ENCODE measurements at regions of chr10 and their contacts with region 1.

Region 1: DNA sequence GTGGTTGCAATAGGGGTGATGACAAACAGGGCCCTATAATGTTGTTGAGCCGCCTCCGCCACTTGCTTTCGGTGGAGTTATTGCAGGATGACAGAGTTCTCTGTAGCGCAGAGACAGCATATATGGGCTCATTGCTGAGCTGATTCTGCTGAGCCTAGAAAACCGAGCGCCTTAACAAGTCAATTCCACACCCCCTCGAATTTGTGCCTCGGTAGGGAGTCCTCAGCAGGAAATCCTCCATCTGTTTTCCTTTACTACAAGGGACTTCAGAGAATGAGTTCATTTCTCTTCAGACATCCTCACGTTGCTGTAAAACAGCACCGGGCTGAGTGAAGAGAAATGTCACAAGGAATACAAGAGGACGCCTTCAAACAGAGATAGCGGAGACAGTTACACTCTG is 90.7 kb upstream of the KIAA1217 start:
- DNase-seq: peak in 1 of 2 donors; percentile 18
- ATAC-seq: peak in 7 of 8 donors; percentile 25 to 73 (median 54)
- H3K4me3 ChIP-seq: peak overlapping the region in 9 of 10 donors; percentile 14 to 49 (median 36)
- H3K27ac ChIP-seq: peak overlapping the region in 9 of 10 donors; percentile 20 to 84 (median 62)
- H3K4me1 ChIP-seq: peaks cover 10 to 49% (median 23%) of the 10 kb centered on the region in 9 donors
- H3K27me3 ChIP-seq: no peaks in the 10 kb centered on the region
- CTCF ChIP-seq: no peak

Region 2: GRCh38 chr10:24097751-24098207 is 20.5 kb before region 1 on chr10:
- intact Hi-C with region 1: loop called in 1 of 10 experiments (anchors 1 kb)
- DNase-seq: no peak
- ATAC-seq: no peak
- H3K4me3 ChIP-seq: no peak overlapping the region
- H3K27ac ChIP-seq: no peak overlapping the region
- H3K4me1 ChIP-seq: peaks cover 0 to 8% (median 0%) of the 10 kb centered on the region in 9 donors
- H3K27me3 ChIP-seq: no peaks in the 10 kb centered on the region
- CTCF ChIP-seq: no peak

Region 3: GRCh38 chr10:24156686-24157085 is 38.4 kb after region 1 on chr10:
- intact Hi-C with region 1: loop called in 1 of 10 experiments (anchors 5 kb)
- DNase-seq: no peak
- ATAC-seq: no peak
- H3K4me3 ChIP-seq: no peak overlapping the region
- H3K27ac ChIP-seq: no peak overlapping the region
- H3K4me1 ChIP-seq: peaks cover 0 to 32% (median 7%) of the 10 kb centered on the region in 9 donors
- H3K27me3 ChIP-seq: no peaks in the 10 kb centered on the region
- CTCF ChIP-seq: no peak